ENCODE measurements at regions of chr17 and their contacts with region 1.

Region 1: DNA sequence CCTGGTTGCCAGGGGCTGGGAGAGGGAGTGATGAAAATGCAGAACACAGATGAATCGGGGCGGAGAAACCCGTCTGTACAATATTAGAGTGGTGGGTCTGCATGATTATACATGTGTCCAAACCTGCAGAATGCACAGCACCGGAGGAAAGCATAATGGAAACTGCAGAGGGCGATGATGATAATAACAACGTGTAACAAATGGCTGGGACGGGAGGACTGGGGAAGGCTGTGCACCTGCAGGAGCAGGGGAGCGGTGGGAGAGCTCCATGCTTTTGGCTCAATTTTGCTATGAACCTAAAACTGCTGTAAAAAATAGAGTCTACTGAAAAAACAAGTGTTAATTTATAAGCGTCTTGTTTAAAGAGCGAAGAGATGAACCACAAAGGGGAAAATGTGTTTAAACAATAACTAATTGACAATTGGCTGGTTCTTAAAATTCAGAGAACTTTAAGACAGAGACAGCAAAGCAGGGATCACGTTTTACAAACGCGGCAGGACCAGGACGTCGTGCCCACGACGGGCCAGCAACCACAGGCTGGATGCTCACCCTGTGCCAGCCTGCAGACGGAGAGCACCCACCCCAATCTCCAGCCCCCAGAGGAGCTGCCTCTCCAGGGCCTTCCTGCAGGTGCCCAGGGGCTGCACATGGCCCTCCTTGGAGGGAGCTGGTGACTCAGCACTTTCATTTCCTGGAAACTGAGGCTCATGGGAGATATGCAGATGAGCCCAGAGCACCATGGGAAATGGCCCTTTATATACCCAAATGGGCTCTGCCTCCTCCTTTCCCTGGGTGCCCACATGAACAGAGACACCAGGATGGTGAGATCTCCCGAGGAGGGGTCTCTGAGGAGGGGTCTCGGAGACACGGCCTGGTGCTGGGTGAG is at the start of gene TEX19:
- DNase-seq: no peak
- H3K4me3 ChIP-seq: no peak within 1 kb of the TSS
- H3K27ac ChIP-seq: no peak within 1 kb of the TSS
- H3K4me1 ChIP-seq: peaks cover 0 to 8% (median 4%) of the 10 kb centered on the region in 4 donors
- H3K27me3 ChIP-seq: peaks cover 0 to 37% of the 10 kb centered on the region in 2 donors
- CTCF ChIP-seq: no peak

Region 2: GRCh38 chr17:82418001-82418986 is 59.6 kb after region 1 on chr17 and contains the starts of genes HEXD and OGFOD3:
- intact Hi-C with region 1: loop called (anchors 5 kb)
- DNase-seq: peak; percentile 69 to 90
- H3K4me3 ChIP-seq: peak within 1 kb of the TSS; percentile 58 to 77
- H3K27ac ChIP-seq: peak within 1 kb of the TSS; percentile 84 to 85
- H3K4me1 ChIP-seq: peaks cover 0 to 24% (median 16%) of the 10 kb centered on the region in 4 donors
- H3K27me3 ChIP-seq: no peaks in the 10 kb centered on the region
- CTCF ChIP-seq: peak in 1 of 2 experiments; percentile 22

Region 3: DNA sequence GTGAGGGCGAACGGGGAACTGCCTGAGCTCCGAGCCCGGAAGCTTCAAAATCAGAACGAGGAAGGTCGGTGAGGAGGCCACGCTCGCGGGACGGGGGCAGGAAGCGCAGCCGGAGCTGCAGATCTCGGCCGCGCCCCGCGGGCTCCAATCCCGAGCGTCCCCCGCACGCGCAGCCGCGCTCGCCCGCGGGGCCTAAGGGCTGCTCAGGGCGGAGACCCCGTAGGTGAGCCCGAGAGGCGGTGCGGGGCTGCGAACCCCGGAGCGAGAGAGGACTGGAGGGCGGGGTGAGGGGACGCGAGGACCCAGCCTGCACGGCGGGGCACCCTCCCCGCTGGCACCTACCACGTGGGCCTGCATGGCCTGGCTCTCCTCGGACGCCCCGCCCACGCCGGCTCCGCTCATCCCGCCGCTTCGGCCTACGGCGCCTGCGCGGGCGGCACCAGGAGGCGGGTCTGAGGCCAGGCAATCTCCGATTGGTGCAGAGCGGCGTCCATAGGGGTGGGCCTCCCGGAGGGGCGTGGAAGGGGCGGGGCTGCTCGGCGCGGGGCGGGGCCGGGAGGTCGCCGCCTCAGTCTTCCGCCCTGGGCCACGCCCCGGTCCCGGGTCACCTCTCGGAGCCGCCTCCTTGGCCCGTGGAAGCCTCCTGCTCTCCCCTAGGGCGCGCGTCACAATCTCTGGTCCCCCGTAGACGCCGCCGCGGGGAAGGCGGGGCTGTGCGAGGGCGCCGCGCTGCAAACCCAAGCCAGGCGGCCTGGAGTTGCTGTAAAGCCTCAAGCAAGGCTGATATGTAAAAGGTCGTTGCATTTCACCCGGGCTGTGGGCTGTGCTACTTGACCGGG is 692.9 kb after region 1 on chr17:
- intact Hi-C with region 1: no loop called
- DNase-seq: peak; percentile 97 to 99
- H3K4me3 ChIP-seq: peak overlapping the region; percentile 72 to 97
- H3K27ac ChIP-seq: peak overlapping the region; percentile 76 to 87
- H3K4me1 ChIP-seq: peaks cover 0 to 31% (median 24%) of the 10 kb centered on the region in 4 donors
- H3K27me3 ChIP-seq: no peaks in the 10 kb centered on the region
- CTCF ChIP-seq: peak in 1 of 2 experiments; percentile 5

Measured in tibial artery (tissue), 4 donors.